ENCODE measurements at regions of chr2 and their contacts with region 1.

Region 1: DNA sequence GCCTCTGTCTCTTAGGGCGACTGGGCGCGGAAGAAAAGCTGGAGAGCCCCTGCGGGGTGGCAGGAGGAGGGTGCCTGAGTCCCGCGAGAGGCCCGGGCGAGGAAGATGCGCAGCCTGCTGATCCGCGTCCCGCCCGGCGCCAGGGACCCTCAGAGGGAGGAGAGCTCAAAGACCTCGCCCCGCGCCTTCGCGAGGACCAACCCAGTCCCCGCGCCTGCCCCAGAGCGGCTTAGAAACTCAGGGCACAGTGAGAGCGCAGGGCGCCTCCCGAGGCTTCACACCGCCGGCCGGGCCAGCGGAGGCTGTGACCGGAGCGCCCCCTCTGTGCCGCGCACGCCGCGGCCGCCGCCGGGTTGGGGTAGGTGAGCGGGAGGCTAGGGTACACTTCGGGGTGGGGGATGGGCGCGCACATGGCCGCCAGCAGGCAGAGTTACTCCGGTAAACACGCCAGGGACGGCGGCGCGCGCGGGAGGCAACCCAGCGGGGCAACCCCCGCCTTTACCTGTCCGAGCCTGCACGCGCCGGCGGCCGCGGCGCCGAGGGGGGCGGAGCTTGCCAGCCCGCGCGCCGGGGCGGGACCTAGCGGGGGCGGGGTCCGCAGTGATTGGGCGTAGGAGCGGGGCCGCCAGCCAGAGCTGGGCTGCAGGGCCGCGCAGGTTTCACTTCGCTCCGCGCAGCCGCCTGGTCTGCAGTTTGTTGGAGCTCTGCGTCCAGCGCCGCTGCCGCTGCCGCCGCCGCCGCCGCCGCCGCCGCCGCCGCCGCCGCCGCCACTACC is at the start of gene BCL2L11:
- DNase-seq: peak; percentile 90 to 96
- ATAC-seq: peak; percentile 76 to 86 (median 84)
- H3K4me3 ChIP-seq: peak within 1 kb of the TSS; percentile 84
- H3K27ac ChIP-seq: peak within 1 kb of the TSS; percentile 93
- H3K4me1 ChIP-seq: peaks cover 19% of the 10 kb centered on the region
- H3K27me3 ChIP-seq: peaks cover 0 to 4% (median 0%) of the 10 kb centered on the region in 3 donors
- CTCF ChIP-seq: no peak
- total RNA-seq, gene BCL2L11: 8.2 to 25.4 (median 11.7) TPM

Region 2: GRCh38 chr2:110812726-110813645 is 307.5 kb before region 1 on chr2:
- intact Hi-C with region 1: loop called (anchors 5 to 10 kb)
- DNase-seq: no peak
- ATAC-seq: no peak
- H3K4me3 ChIP-seq: no peak overlapping the region
- H3K27ac ChIP-seq: peak overlapping the region; percentile 44
- H3K4me1 ChIP-seq: peaks cover 22% of the 10 kb centered on the region
- H3K27me3 ChIP-seq: no peaks in the 10 kb centered on the region
- CTCF ChIP-seq: no peak

Region 3: DNA sequence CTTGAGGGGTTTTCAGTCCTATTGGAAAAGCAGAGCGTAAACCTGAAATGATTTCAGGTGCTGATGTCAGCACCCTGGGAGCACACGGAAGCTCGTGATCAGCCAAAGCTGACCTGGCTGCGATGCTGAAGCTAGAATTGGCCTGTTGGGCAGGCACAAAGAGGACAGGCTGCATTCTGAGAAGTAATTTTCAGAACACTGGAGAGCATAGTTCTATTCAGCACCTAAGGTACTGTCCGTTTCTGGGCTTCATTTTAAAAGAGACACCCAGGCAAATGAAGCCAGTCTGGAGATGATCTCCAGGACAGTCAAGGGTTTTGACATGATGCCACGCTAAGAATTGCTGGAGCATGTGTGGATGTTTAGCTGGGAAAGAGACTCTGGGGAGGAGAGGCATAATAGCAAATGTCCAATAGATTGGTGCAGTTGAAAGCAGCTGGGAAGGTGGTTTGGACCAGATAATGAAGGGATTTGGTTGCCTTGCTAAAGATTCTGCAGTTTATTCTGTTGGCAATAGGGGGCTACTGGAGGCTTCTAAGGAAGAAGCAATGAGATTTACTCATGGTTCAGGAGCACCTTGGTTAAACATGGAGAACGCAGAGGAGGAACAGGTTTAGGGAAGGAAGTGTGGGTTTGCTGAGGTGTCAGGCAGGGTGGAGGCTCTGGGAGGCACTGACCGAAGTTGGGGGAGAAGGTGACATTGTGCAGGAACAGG is 301.5 kb before region 1 on chr2:
- intact Hi-C with region 1: loop called (anchors 5 to 10 kb)
- DNase-seq: no peak
- ATAC-seq: no peak
- H3K4me3 ChIP-seq: no peak overlapping the region
- H3K27ac ChIP-seq: no peak overlapping the region
- H3K4me1 ChIP-seq: peaks cover 18% of the 10 kb centered on the region
- H3K27me3 ChIP-seq: no peaks in the 10 kb centered on the region
- CTCF ChIP-seq: no peak

Region 4: DNA sequence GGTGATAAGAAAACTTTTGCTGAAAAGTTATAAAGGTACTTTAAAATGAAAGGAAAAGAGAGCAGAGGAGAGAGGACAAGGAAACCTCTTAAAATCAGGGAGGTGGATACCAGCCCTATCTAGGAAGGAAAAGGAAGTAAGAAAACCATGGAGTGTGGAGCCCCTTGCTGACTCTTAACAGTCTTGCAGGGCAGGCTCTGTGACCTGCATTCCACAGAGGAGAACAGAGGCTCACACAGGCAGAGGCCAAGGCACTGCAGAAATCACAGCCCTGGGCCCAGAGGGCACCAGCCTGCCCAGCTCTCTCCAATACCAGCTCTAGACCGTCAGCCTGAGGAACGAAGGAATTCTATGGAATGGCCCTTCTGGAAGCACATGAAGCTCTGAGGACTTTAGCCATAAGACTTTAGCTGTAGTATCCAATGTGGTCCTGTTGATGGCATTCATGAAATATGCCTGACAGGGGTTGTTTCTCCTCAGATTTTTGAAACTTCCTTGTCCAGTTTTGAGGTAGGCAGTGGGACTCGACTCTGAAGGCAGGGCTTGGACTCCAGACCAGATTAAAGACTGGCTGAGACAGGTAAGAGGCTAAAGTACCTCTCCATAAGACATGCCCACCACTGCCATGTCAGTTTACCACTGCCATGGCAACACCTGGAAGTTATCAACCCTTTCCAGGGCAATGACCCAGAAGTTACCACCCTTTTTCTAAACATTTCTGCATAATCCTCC is 547.3 kb after region 1 on chr2:
- intact Hi-C with region 1: loop called in 1 of 2 experiments (anchors 2 kb)
- DNase-seq: no peak
- ATAC-seq: peak; percentile 71 to 83 (median 79)
- H3K4me3 ChIP-seq: no peak overlapping the region
- H3K27ac ChIP-seq: no peak overlapping the region
- H3K4me1 ChIP-seq: no peaks in the 10 kb centered on the region
- H3K27me3 ChIP-seq: no peaks in the 10 kb centered on the region
- CTCF ChIP-seq: peak; percentile 43